Ascending aorta (tissue), 2 donors: ENCODE measurements at regions of chr7 and their contacts with region 1.

Region 1: GRCh38 chr7:17298207-17298839 is at the start of gene AHR:
- DNase-seq: peak; percentile 80 to 97
- H3K4me3 ChIP-seq: peak within 1 kb of the TSS; percentile 99 to 100
- H3K27ac ChIP-seq: peak within 1 kb of the TSS; percentile 97 to 98
- H3K4me1 ChIP-seq: peaks cover 0 to 12% of the 10 kb centered on the region in 2 donors
- H3K27me3 ChIP-seq: no peaks in the 10 kb centered on the region
- CTCF ChIP-seq: no peak
- total RNA-seq, gene AHR: 149 TPM

Region 2: GRCh38 chr7:16645593-16646471 is 652.5 kb before region 1 on chr7 and contains the starts of genes ANKMY2 and BZW2:
- intact Hi-C with region 1: loop called (anchors 5 kb)
- DNase-seq: peak; percentile 85 to 97
- H3K4me3 ChIP-seq: peak within 1 kb of the TSS; percentile 81 to 96
- H3K27ac ChIP-seq: peak within 1 kb of the TSS; percentile 83 to 88
- H3K4me1 ChIP-seq: peaks cover 0 to 20% of the 10 kb centered on the region in 2 donors
- H3K27me3 ChIP-seq: no peaks in the 10 kb centered on the region
- CTCF ChIP-seq: no peak
- total RNA-seq, gene ANKMY2: 11.2 TPM
- total RNA-seq, gene BZW2: 18.0 TPM

Region 3: GRCh38 chr7:16982640-16983350 is 315.5 kb before region 1 on chr7:
- intact Hi-C with region 1: loop called (anchors 1 kb)
- DNase-seq: no peak
- H3K4me3 ChIP-seq: no peak overlapping the region
- H3K27ac ChIP-seq: no peak overlapping the region
- H3K4me1 ChIP-seq: peaks cover 0 to 7% of the 10 kb centered on the region in 2 donors
- H3K27me3 ChIP-seq: no peaks in the 10 kb centered on the region
- CTCF ChIP-seq: peak; percentile 52 to 86 (median 73)

Region 4: GRCh38 chr7:17095001-17095574 is 203.2 kb before region 1 on chr7:
- intact Hi-C with region 1: no loop called
- DNase-seq: no peak
- H3K4me3 ChIP-seq: no peak overlapping the region
- H3K27ac ChIP-seq: no peak overlapping the region
- H3K4me1 ChIP-seq: no peaks in the 10 kb centered on the region
- H3K27me3 ChIP-seq: no peaks in the 10 kb centered on the region
- CTCF ChIP-seq: no peak

Region 5: GRCh38 chr7:17275749-17276671 is 22.3 kb before region 1 on chr7:
- intact Hi-C with region 1: loop called (anchors 1 kb)
- DNase-seq: peak in 1 of 2 donors; percentile 70
- H3K4me3 ChIP-seq: peak overlapping the region in 1 of 2 donors; percentile 13
- H3K27ac ChIP-seq: peak overlapping the region; percentile 63 to 70
- H3K4me1 ChIP-seq: peaks cover 0 to 17% of the 10 kb centered on the region in 2 donors
- H3K27me3 ChIP-seq: no peaks in the 10 kb centered on the region
- CTCF ChIP-seq: no peak

Region 6: DNA sequence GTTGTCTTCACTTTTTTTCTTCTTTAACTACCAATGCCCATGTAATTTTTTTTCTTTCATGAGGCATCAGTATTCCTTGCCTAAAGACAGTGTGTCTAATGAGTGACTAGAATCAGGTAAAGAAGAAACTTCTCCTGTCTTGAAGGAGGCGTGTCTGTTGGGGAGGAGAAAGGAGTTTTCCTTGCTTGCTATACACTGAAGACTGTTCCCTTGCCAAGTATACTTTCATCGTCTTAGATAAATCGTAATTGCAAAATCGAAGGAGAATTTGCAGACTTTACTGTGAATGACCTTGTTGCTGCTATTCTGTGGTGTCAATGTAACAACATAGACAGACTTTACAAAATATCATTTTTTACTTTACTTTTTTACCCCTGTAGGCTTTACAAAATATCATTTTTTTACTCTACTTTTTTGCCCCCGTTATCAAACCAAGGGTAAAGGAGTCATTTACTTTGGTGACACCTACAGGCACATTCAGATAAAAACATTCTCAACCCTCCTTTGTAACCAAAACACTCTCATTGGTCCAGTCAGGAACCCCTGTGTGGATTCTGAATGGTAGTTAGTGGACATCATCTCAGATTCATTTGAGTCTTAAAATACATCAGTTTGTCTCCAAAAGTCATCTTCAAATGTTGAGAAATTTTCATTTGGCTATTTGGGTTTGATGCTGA is 232.6 kb after region 1 on chr7:
- intact Hi-C with region 1: loop called (anchors 10 kb)
- DNase-seq: no peak
- H3K4me3 ChIP-seq: no peak overlapping the region
- H3K27ac ChIP-seq: no peak overlapping the region
- H3K4me1 ChIP-seq: no peaks in the 10 kb centered on the region
- H3K27me3 ChIP-seq: no peaks in the 10 kb centered on the region
- CTCF ChIP-seq: peak in 1 of 3 experiments; percentile 26

Region 7: GRCh38 chr7:17940302-17940883 is 642.1 kb after region 1 on chr7 and contains the start of gene SNX13:
- intact Hi-C with region 1: loop called (anchors 10 kb)
- DNase-seq: peak; percentile 74 to 95
- H3K4me3 ChIP-seq: peak within 1 kb of the TSS; percentile 85 to 98
- H3K27ac ChIP-seq: peak within 1 kb of the TSS; percentile 95 to 99
- H3K4me1 ChIP-seq: peaks cover 0 to 27% of the 10 kb centered on the region in 2 donors
- H3K27me3 ChIP-seq: no peaks in the 10 kb centered on the region
- CTCF ChIP-seq: peak in 2 of 3 experiments; percentile 21 to 35
- total RNA-seq, gene SNX13: 26.2 TPM